ENCODE measurements at regions of chr1 and their contacts with region 1.

Region 1: DNA sequence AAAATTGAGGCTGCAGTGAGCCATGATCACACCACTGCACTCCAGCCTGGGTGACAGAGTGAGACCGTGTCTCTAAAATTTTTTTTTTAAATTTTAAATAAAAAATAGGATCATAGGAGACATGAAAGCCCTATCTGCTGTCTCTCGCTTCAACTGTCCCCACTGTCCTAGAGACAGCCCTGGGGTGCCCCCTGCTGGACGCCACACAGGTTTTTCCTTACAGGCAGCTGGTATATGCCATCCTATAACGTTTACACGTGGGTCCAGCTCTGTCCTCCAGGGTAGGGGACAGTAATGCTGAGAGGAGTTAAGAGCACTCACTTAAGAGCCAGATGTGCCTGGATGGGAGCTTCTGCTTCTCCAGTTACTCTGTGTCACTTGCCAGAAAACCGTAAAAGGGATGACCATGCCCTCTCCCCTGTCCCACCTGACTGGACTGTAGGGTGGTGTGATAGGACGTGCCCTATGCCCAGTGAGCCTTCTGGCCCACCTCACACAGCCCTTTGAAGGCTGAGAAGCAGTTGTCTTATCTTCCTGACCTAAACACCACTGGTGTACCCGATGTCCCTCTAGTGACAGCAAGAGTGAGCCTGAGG is 8.5 kb downstream of the FBXO2 start:
- DNase-seq: peak; percentile 51
- H3K27ac ChIP-seq: no peak overlapping the region
- CTCF ChIP-seq: peak; percentile 75

Region 2: GRCh38 chr1:11245904-11246719 is 399.7 kb before region 1 on chr1:
- CTCF ChIA-PET with region 1: interaction called, 11 read pairs
- POLR2A ChIA-PET with region 1: no interaction called
- DNase-seq: no peak
- H3K27ac ChIP-seq: no peak overlapping the region
- CTCF ChIP-seq: no peak

Region 3: GRCh38 chr1:11752359-11753088 is 106.8 kb after region 1 on chr1:
- CTCF ChIA-PET with region 1: no interaction called
- POLR2A ChIA-PET with region 1: no interaction called
- DNase-seq: no peak
- H3K27ac ChIP-seq: no peak overlapping the region
- CTCF ChIP-seq: no peak

Measured in RWPE1 (cell line).